Natural killer cell (primary cell): ENCODE measurements at regions of chr19 and their contacts with region 1.

Region 1: GRCh38 chr19:10269333-10270179 is 1.4 kb upstream of the ICAM1 start:
- DNase-seq: peak; percentile 92 to 93
- ATAC-seq: peak; percentile 56 to 68 (median 58)
- H3K4me3 ChIP-seq: peak overlapping the region; percentile 83
- H3K4me3 Mint-ChIP-seq: peak overlapping the region; percentile 90
- H3K27ac ChIP-seq: peak overlapping the region; percentile 97
- H3K27ac Mint-ChIP-seq: peak overlapping the region; percentile 94 to 96
- H3K4me1 ChIP-seq: peaks cover 40% of the 10 kb centered on the region
- H3K4me1 Mint-ChIP-seq: peaks cover 24 to 39% of the 10 kb centered on the region in 2 donors
- H3K27me3 ChIP-seq: no peaks in the 10 kb centered on the region
- H3K27me3 Mint-ChIP-seq: no peaks in the 10 kb centered on the region
- CTCF ChIP-seq: peak; percentile 89

Region 2: GRCh38 chr19:10292206-10292788 is 22.7 kb after region 1 on chr19:
- intact Hi-C with region 1: loop called (anchors 2 kb)
- DNase-seq: peak; percentile 75 to 77
- ATAC-seq: peak; percentile 52 to 70 (median 59)
- H3K4me3 ChIP-seq: peak overlapping the region; percentile 15
- H3K4me3 Mint-ChIP-seq: peak overlapping the region; percentile 86
- H3K27ac ChIP-seq: no peak overlapping the region
- H3K27ac Mint-ChIP-seq: peak overlapping the region; percentile 63 to 71
- H3K4me1 ChIP-seq: peaks cover 90% of the 10 kb centered on the region
- H3K4me1 Mint-ChIP-seq: peaks cover 49 to 68% of the 10 kb centered on the region in 2 donors
- H3K27me3 ChIP-seq: peaks cover 63% of the 10 kb centered on the region
- H3K27me3 Mint-ChIP-seq: peaks cover 7 to 40% of the 10 kb centered on the region in 2 donors
- CTCF ChIP-seq: no peak

Region 3: GRCh38 chr19:10339380-10339960 is 69.9 kb after region 1 on chr19 and contains the start of gene ICAM3:
- intact Hi-C with region 1: loop called (anchors 2 kb)
- DNase-seq: peak; percentile 49 to 72
- ATAC-seq: peak; percentile 90 to 96 (median 94)
- H3K4me3 ChIP-seq: peak within 1 kb of the TSS; percentile 87
- H3K4me3 Mint-ChIP-seq: peak within 1 kb of the TSS; percentile 95
- H3K27ac ChIP-seq: peak within 1 kb of the TSS; percentile 80
- H3K27ac Mint-ChIP-seq: peak within 1 kb of the TSS; percentile 82 to 92
- H3K4me1 ChIP-seq: peaks cover 34% of the 10 kb centered on the region
- H3K4me1 Mint-ChIP-seq: peaks cover 15 to 24% of the 10 kb centered on the region in 2 donors
- H3K27me3 ChIP-seq: no peaks in the 10 kb centered on the region
- H3K27me3 Mint-ChIP-seq: no peaks in the 10 kb centered on the region
- CTCF ChIP-seq: no peak
- total RNA-seq, gene ICAM3: 189 to 224 (median 199) TPM

Region 4: DNA sequence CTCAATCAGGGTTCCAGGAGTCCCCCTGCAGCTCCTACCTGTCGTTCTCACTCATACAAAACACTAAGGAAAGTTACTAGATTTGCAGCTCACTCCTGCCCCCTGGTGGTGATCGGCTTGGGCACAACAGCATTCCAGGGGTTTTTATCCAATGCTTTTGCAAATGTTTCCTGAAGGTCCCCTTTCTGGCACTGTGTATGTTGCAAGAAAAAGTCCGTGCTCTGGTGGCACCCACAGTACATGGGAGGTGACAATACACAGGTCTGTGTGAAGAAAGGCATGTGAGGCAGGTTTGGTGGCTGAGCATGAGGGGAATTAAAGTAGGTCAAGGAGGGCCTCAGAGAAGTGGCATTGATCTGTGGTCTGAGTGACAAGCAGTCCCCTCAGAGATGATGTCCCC is 119.4 kb after region 1 on chr19:
- intact Hi-C with region 1: loop called (anchors 1 kb)
- DNase-seq: peak; percentile 82 to 91
- ATAC-seq: peak; percentile 55 to 68 (median 61)
- H3K4me3 ChIP-seq: no peak overlapping the region
- H3K4me3 Mint-ChIP-seq: no peak overlapping the region
- H3K27ac ChIP-seq: no peak overlapping the region
- H3K27ac Mint-ChIP-seq: peak overlapping the region in 1 of 2 donors; percentile 54
- H3K4me1 ChIP-seq: peaks cover 6% of the 10 kb centered on the region
- H3K4me1 Mint-ChIP-seq: peaks cover 4 to 10% of the 10 kb centered on the region in 2 donors
- H3K27me3 ChIP-seq: no peaks in the 10 kb centered on the region
- H3K27me3 Mint-ChIP-seq: no peaks in the 10 kb centered on the region
- CTCF ChIP-seq: peak; percentile 93